Posterior vena cava (tissue), 2 donors: ENCODE measurements at regions of chr6 and their contacts with region 1.

Region 1: GRCh38 chr6:28940858-28941680 is 17.3 kb upstream of the TRIM27 start:
- DNase-seq: peak; percentile 85

Region 2: GRCh38 chr6:28683944-28684538 is 257.0 kb before region 1 on chr6:
- intact Hi-C with region 1: no loop called
- DNase-seq: no peak

Region 3: GRCh38 chr6:28981833-28982475 is 40.9 kb after region 1 on chr6:
- intact Hi-C with region 1: loop called in 1 of 2 experiments (anchors 5 kb)
- DNase-seq: peak; percentile 89

Region 4: GRCh38 chr6:29319931-29320330 is 378.9 kb after region 1 on chr6:
- intact Hi-C with region 1: no loop called
- DNase-seq: no peak